GM12878 (cell line): ENCODE measurements at regions of chr17 and their contacts with region 1.

Region 1: GRCh38 chr17:10875979-10876555 is 38.2 kb upstream of the PIRT start:
- DNase-seq: no peak
- ATAC-seq: peak; percentile 82
- H3K4me3 ChIP-seq: no peak overlapping the region
- H3K27ac ChIP-seq: no peak overlapping the region
- H3K4me1 ChIP-seq: no peaks in the 10 kb centered on the region
- H3K27me3 ChIP-seq: no peaks in the 10 kb centered on the region
- CTCF ChIP-seq: peak; percentile 55 to 68 (median 64)
- EP300 ChIP-seq: no peak
- POLR2A ChIP-seq: no peak
- RAD21 ChIP-seq: peak; percentile 69

Region 2: GRCh38 chr17:11144358-11145233 is 268.5 kb after region 1 on chr17:
- CTCF ChIA-PET with region 1: interaction called, 56 read pairs
- POLR2A ChIA-PET with region 1: no interaction called
- RAD21 ChIA-PET with region 1: interaction called, 5 read pairs
- SMC1A ChIA-PET with region 1: interaction called, 7 read pairs
- in situ Hi-C with region 1: no loop called
- intact Hi-C with region 1: loop called (anchors 1 kb)
- DNase-seq: no peak
- ATAC-seq: no peak
- H3K4me3 ChIP-seq: no peak overlapping the region
- H3K27ac ChIP-seq: no peak overlapping the region
- H3K4me1 ChIP-seq: no peaks in the 10 kb centered on the region
- H3K27me3 ChIP-seq: no peaks in the 10 kb centered on the region
- CTCF ChIP-seq: peak in 2 of 3 experiments; percentile 29 to 36; a peak in 2 of 6 replicates
- EP300 ChIP-seq: no peak
- POLR2A ChIP-seq: no peak
- RAD21 ChIP-seq: no peak

Region 3: GRCh38 chr17:11296994-11297393 is 420.9 kb after region 1 on chr17:
- CTCF ChIA-PET with region 1: interaction called, 18 read pairs
- POLR2A ChIA-PET with region 1: no interaction called
- RAD21 ChIA-PET with region 1: interaction called, 5 read pairs
- SMC1A ChIA-PET with region 1: no interaction called
- in situ Hi-C with region 1: loop called (anchors 10 kb)
- intact Hi-C with region 1: loop called (anchors 2 kb)
- DNase-seq: no peak
- ATAC-seq: no peak
- H3K4me3 ChIP-seq: no peak overlapping the region
- H3K27ac ChIP-seq: no peak overlapping the region
- H3K4me1 ChIP-seq: no peaks in the 10 kb centered on the region
- H3K27me3 ChIP-seq: no peaks in the 10 kb centered on the region
- CTCF ChIP-seq: peak in 1 of 3 experiments; percentile 18; a peak in 1 of 6 replicates
- EP300 ChIP-seq: no peak
- POLR2A ChIP-seq: no peak
- RAD21 ChIP-seq: no peak

Region 4: GRCh38 chr17:11644261-11645212 is 768.5 kb after region 1 on chr17:
- CTCF ChIA-PET with region 1: interaction called, 28 read pairs
- POLR2A ChIA-PET with region 1: no interaction called
- RAD21 ChIA-PET with region 1: no interaction called
- SMC1A ChIA-PET with region 1: interaction called, 7 read pairs
- in situ Hi-C with region 1: loop called (anchors 25 kb)
- intact Hi-C with region 1: loop called (anchors 1 kb)
- DNase-seq: no peak
- ATAC-seq: peak; percentile 48; the same call in 2 of the 3 replicates
- H3K4me3 ChIP-seq: no peak overlapping the region
- H3K27ac ChIP-seq: no peak overlapping the region
- H3K4me1 ChIP-seq: no peaks in the 10 kb centered on the region
- H3K27me3 ChIP-seq: no peaks in the 10 kb centered on the region
- CTCF ChIP-seq: peak; percentile 60 to 77 (median 72)
- EP300 ChIP-seq: no peak
- POLR2A ChIP-seq: no peak
- RAD21 ChIP-seq: peak; percentile 31

Region 5: DNA sequence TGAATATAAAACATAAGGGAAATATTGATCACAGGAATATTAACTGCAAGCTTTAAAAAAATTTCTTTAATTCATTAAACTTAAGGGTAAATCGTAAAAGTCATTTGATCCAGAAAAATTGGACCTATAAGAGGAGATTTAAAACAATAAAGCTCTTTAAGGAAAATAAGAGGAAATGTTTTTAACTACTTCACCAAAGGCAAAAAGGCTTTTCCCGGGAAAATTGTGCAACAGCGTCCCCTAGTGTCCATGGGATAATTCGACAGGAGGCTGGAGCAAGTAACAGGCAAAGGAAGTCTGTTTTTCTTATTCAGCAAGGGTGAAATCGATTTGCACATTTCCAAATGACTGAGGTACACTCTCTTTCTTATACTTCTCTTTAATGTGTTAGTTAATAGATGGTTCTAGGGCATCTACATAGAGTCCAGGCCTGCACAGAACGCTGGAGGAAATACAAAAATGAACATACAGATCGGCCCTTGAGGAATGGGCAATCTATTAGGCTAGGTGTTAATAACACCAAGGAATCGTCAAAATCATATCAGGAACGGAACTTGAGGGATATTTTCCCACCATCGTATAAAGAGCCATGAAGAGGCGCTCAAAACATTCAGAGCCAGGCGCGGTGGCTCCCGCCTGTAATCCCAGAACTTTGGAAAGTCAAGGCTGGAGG is 1059.8 kb after region 1 on chr17:
- CTCF ChIA-PET with region 1: interaction called, 6 read pairs
- POLR2A ChIA-PET with region 1: no interaction called
- RAD21 ChIA-PET with region 1: interaction called, 3 read pairs
- SMC1A ChIA-PET with region 1: no interaction called
- in situ Hi-C with region 1: loop called (anchors 25 kb)
- intact Hi-C with region 1: loop called (anchors 10 kb)
- DNase-seq: no peak
- ATAC-seq: no peak
- H3K4me3 ChIP-seq: no peak overlapping the region
- H3K27ac ChIP-seq: no peak overlapping the region
- H3K4me1 ChIP-seq: no peaks in the 10 kb centered on the region
- H3K27me3 ChIP-seq: no peaks in the 10 kb centered on the region
- CTCF ChIP-seq: peak; percentile 59 to 67 (median 64); a peak in 5 of 6 replicates
- EP300 ChIP-seq: no peak
- POLR2A ChIP-seq: no peak
- RAD21 ChIP-seq: peak; percentile 61

Region 6: GRCh38 chr17:11986942-11987329 is 1110.9 kb after region 1 on chr17:
- CTCF ChIA-PET with region 1: interaction called, 8 read pairs
- POLR2A ChIA-PET with region 1: no interaction called
- RAD21 ChIA-PET with region 1: interaction called, 3 read pairs
- SMC1A ChIA-PET with region 1: no interaction called
- in situ Hi-C with region 1: no loop called
- intact Hi-C with region 1: loop called (anchors 5 kb)
- DNase-seq: no peak
- ATAC-seq: no peak
- H3K4me3 ChIP-seq: no peak overlapping the region
- H3K27ac ChIP-seq: no peak overlapping the region
- H3K4me1 ChIP-seq: no peaks in the 10 kb centered on the region
- H3K27me3 ChIP-seq: no peaks in the 10 kb centered on the region
- CTCF ChIP-seq: peak in 2 of 3 experiments; percentile 32 to 37; a peak in 4 of 6 replicates
- EP300 ChIP-seq: no peak
- POLR2A ChIP-seq: no peak
- RAD21 ChIP-seq: peak; percentile 32; the same call in 1 of the 2 replicates